ENCODE measurements at regions of chr2 and their contacts with region 1.

Region 1: DNA sequence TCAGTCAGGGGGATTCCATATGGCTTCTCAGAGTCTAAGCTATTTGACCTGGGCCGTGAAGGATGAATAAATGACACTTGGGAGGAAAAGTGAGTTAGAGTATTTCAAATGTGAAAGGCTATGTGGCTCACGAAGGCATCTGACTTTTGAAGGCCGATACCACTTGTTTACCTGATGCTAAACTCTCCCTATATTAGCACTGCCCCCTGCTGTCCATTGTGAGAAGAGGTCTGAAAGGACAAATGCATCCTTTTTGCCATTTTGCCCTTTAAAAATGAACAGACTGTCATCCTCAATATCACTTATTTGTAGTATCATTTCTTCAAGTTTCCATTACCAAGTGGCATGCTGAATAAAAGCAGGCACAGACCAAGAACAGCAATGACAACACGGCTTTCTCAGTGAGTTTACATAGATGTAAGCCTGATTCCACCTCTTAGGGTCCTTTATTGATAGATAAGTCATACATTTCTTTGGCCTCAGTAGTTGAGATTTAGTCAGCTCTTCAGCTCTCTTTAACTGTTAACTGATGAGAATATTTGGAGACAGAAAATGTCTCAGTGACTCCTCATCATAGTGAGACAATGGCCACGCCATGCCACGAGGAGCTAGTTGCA is 40.1 kb downstream of the DOCK10 start:
- DNase-seq: peak; percentile 77 to 87 (median 86)
- H3K4me3 ChIP-seq: no peak overlapping the region
- H3K27ac ChIP-seq: no peak overlapping the region
- H3K4me1 ChIP-seq: peaks cover 0 to 9% (median 6%) of the 10 kb centered on the region in 4 experiments
- H3K27me3 ChIP-seq: no peaks in the 10 kb centered on the region

Region 2: GRCh38 chr2:224807153-224807964 is 194.8 kb before region 1 on chr2:
- CTCF ChIA-PET with region 1: interaction called, 16 read pairs
- POLR2A ChIA-PET with region 1: no interaction called
- DNase-seq: peak; percentile 14 to 36 (median 30)
- H3K4me3 ChIP-seq: no peak overlapping the region
- H3K27ac ChIP-seq: no peak overlapping the region
- H3K4me1 ChIP-seq: no peaks in the 10 kb centered on the region
- H3K27me3 ChIP-seq: no peaks in the 10 kb centered on the region

Region 3: DNA sequence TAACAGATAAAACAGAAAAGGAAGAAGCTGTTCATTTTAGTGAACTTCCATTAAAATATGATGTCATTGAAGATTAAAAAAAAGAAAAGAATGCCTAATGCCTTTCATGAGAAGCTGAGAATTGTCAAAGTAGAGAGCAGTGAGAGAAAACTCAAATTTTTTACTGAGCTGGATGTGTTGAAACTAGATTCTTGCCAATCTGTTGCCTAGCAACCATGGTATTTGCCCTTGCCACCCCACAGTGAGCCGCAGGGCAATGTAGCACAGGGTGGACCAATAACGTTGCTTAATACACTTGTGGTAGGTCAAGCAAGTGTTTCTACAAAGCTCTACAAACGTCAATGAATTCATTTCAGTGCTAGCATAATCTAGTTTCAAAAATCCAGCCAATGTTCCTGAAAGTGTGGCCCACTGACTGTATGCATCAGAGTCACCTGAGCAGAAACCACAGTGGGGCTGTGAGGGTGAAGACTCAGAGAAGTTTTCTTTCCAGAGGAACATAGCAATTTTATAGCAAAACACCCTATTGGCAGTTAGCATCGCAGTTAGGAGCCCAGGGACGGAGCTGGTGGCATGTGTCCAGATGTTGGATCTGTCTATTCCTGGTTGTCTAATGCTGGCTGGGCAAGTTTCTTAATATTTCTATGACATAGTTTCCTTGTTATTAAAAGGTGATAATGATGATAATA is 92.1 kb before region 1 on chr2:
- CTCF ChIA-PET with region 1: interaction called, 17 read pairs
- POLR2A ChIA-PET with region 1: no interaction called
- DNase-seq: peak in 1 of 3 donors; percentile 74
- H3K4me3 ChIP-seq: no peak overlapping the region
- H3K27ac ChIP-seq: peak overlapping the region; percentile 11
- H3K4me1 ChIP-seq: peaks cover 5 to 13% (median 10%) of the 10 kb centered on the region in 4 experiments
- H3K27me3 ChIP-seq: no peaks in the 10 kb centered on the region

Region 4: GRCh38 chr2:224948859-224949258 is 53.3 kb before region 1 on chr2:
- CTCF ChIA-PET with region 1: interaction called, 26 read pairs
- POLR2A ChIA-PET with region 1: no interaction called
- DNase-seq: peak; percentile 88 to 98 (median 94)
- H3K4me3 ChIP-seq: no peak overlapping the region
- H3K27ac ChIP-seq: peak overlapping the region; percentile 55 to 61
- H3K4me1 ChIP-seq: peaks cover 23 to 80% (median 50%) of the 10 kb centered on the region in 4 experiments
- H3K27me3 ChIP-seq: no peaks in the 10 kb centered on the region

Region 5: DNA sequence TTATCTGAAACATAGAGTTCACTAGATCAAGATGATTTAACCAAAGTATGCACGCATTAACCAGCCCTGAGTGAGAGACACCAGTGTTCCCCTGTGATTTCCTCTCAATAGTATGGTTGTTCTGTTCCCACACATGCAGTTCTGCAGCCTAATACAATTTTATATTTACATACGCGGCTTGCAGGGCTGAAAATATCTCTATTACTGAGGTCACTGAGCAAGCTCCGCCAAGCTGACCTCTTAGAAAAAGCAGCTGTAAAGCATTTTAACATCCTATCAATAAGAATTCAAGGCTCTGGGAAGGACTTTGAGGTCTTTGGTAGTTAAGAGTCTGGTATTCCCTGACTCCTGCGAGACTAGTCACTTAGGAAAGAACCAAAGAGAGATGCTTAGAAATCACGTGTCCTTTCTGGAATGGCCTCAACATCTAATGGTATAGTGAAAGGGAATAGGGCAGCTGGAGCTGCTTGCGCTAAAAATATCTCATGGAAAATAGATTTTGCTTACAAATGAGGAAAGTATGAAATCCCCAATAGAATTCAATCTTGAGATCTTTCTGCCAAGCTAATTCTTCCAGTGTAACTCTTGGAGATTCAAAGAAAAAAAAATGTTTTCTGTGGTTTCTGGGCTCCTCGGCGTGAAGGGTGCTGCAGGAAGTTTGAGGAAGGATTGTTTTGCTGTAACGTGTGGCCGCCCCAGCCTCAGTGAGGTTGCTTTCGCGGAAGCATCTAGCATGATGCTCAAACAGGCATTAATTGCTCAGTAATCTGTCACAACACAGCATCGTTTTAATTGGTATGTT is 19.0 kb before region 1 on chr2:
- CTCF ChIA-PET with region 1: interaction called, 29 read pairs
- POLR2A ChIA-PET with region 1: no interaction called
- DNase-seq: peak; percentile 20 to 64 (median 48)
- H3K4me3 ChIP-seq: peak overlapping the region in 1 of 7 experiments; percentile 17
- H3K27ac ChIP-seq: no peak overlapping the region
- H3K4me1 ChIP-seq: peaks cover 0 to 19% (median 11%) of the 10 kb centered on the region in 4 experiments
- H3K27me3 ChIP-seq: no peaks in the 10 kb centered on the region